ENCODE measurements at regions of chr11 and their contacts with region 1.

Region 1: DNA sequence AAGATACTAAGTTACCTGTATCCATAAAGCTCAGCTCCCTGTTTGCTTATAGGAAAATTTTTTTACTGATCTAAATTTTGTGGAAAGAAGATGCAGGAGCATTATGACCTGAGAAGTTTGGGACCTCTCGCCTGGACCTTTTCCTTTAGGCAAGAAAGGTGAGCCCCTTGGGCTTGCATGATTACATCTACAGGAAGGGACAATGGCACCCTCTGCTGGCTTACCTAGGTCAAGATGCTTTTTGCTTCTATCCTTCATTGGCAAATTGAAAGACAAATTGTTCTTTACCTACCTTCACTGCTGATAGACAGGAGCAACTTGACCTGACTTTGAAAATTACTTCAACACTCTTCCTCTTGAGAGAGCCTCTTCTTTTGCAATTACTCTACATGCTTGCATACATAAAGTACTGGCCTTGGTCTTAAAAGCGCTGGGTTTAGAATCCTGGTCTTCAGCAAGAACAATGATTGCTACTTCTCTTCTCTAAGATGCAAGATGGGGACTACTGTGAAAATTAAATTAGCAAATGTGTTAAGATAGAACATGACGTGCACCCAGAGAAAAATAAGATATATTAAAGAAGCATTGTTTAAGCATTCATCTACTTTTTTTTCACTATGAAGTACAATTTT is 147.2 kb downstream of the TRPC6 start:
- DNase-seq: no peak
- ATAC-seq: peak; percentile 65
- H3K4me3 ChIP-seq: no peak overlapping the region
- H3K27ac ChIP-seq: no peak overlapping the region
- H3K4me1 ChIP-seq: no peaks in the 10 kb centered on the region
- H3K27me3 ChIP-seq: no peaks in the 10 kb centered on the region
- CTCF ChIP-seq: peak; percentile 53 to 68 (median 66)
- EP300 ChIP-seq: no peak
- POLR2A ChIP-seq: no peak
- RAD21 ChIP-seq: peak; percentile 59

Region 2: GRCh38 chr11:100789500-100789899 is 647.1 kb before region 1 on chr11:
- CTCF ChIA-PET with region 1: no interaction called
- POLR2A ChIA-PET with region 1: no interaction called
- RAD21 ChIA-PET with region 1: no interaction called
- SMC1A ChIA-PET with region 1: no interaction called
- in situ Hi-C with region 1: no loop called
- intact Hi-C with region 1: no loop called
- DNase-seq: no peak
- ATAC-seq: no peak
- H3K4me3 ChIP-seq: no peak overlapping the region
- H3K27ac ChIP-seq: no peak overlapping the region
- H3K4me1 ChIP-seq: no peaks in the 10 kb centered on the region
- H3K27me3 ChIP-seq: no peaks in the 10 kb centered on the region
- CTCF ChIP-seq: no peak
- EP300 ChIP-seq: no peak
- POLR2A ChIP-seq: no peak
- RAD21 ChIP-seq: no peak

Region 3: DNA sequence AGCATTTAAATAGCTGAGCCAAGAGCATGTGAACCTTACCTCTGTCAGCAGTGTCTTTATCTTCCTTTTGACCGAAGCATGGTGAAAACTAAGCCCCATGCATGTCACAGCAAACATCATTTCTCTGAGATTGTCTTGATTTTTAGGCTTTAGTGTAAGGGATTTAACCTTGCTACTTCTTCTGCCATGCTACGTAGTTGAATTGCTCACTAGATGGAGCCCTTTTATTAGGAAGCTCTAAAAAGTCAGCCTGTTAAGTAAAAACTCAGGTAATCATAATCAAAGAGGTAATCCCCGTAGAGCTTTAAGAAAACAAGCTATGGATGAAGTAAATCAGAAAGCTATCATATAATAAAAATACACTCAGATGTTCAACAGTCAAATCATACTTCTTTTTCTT is 456.5 kb before region 1 on chr11:
- CTCF ChIA-PET with region 1: interaction called, 4 read pairs
- POLR2A ChIA-PET with region 1: no interaction called
- RAD21 ChIA-PET with region 1: no interaction called
- SMC1A ChIA-PET with region 1: no interaction called
- in situ Hi-C with region 1: no loop called
- intact Hi-C with region 1: loop called (anchors 10 kb)
- DNase-seq: no peak
- ATAC-seq: no peak; the same call in 1 of the 3 replicates
- H3K4me3 ChIP-seq: no peak overlapping the region
- H3K27ac ChIP-seq: no peak overlapping the region
- H3K4me1 ChIP-seq: no peaks in the 10 kb centered on the region
- H3K27me3 ChIP-seq: no peaks in the 10 kb centered on the region
- CTCF ChIP-seq: peak; percentile 7 to 29 (median 21); a peak in 1 of 6 replicates
- EP300 ChIP-seq: no peak
- POLR2A ChIP-seq: no peak
- RAD21 ChIP-seq: peak; percentile 33; the same call in 1 of the 2 replicates

Measured in GM12878 (cell line).